K562 (cell line): ENCODE measurements at regions of chr1 and their contacts with region 1.

Region 1: GRCh38 chr1:209692745-209693504 is 11.7 kb upstream of the HSD11B1 start:
- DNase-seq: peak; percentile 72 to 85 (median 76)
- ATAC-seq: peak; percentile 79
- H3K4me3 ChIP-seq: no peak overlapping the region
- H3K27ac ChIP-seq: no peak overlapping the region
- H3K4me1 ChIP-seq: no peaks in the 10 kb centered on the region; a peak in 2 of 5 replicates
- H3K27me3 ChIP-seq: peaks cover 0 to 3% of the 10 kb centered on the region in 2 experiments; a peak in 1 of 5 replicates
- CTCF ChIP-seq: peak; percentile 86 to 99 (median 90)
- EP300 ChIP-seq: peak; percentile 34; the same call in 1 of the 2 replicates
- POLR2A ChIP-seq: no peak
- RAD21 ChIP-seq: peak; percentile 99 to 100

Region 2: DNA sequence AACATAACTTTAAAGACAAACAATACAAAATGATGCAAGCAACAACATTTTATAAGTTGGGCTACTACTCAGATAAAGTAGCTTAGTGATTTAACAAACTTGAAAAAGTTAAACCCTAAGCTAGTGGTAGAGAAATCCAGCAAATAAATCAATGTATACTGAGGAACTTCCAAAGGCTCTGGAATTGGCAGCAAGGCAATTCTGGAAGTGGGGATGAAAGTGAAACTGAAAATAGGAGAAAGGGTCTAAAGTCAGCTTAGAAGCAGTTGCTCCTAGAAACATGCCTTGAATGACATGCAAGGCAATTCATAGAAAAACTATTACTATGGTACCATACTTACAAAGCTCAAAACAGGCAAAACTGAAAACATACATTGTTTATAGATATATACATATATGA is 199.4 kb before region 1 on chr1:
- CTCF ChIA-PET with region 1: no interaction called
- POLR2A ChIA-PET with region 1: no interaction called
- in situ Hi-C with region 1: no loop called
- intact Hi-C with region 1: no loop called
- DNase-seq: no peak
- ATAC-seq: no peak
- H3K4me3 ChIP-seq: no peak overlapping the region
- H3K27ac ChIP-seq: no peak overlapping the region
- H3K4me1 ChIP-seq: no peaks in the 10 kb centered on the region
- H3K27me3 ChIP-seq: no peaks in the 10 kb centered on the region
- CTCF ChIP-seq: no peak
- EP300 ChIP-seq: no peak
- POLR2A ChIP-seq: no peak
- RAD21 ChIP-seq: no peak

Region 3: DNA sequence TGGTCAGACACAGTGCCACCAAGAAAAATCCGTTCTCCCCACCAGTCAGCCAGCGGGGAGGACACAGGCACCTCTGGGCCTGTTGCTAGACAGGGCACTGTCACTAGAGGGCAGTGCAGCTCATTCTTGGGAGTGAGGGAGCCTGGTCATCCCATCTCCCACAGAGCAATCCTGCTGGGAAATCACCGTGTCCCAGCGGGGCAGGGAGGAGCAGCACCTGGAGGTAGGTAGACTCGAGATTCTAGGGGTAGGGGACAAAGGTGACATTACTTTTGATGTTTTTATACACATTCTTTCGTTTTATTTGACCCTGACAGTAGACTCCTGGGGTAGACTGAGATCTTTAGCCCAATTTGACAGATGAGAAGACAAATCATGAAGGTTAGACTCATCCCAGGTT is 116.1 kb before region 1 on chr1:
- CTCF ChIA-PET with region 1: interaction called, 64 read pairs
- POLR2A ChIA-PET with region 1: interaction called, 3 read pairs
- in situ Hi-C with region 1: loop called (anchors 5 kb)
- intact Hi-C with region 1: loop called (anchors 1 kb)
- DNase-seq: peak; percentile 76 to 83 (median 82)
- ATAC-seq: peak; percentile 99
- H3K4me3 ChIP-seq: no peak overlapping the region
- H3K27ac ChIP-seq: no peak overlapping the region
- H3K4me1 ChIP-seq: no peaks in the 10 kb centered on the region
- H3K27me3 ChIP-seq: peaks cover 3% of the 10 kb centered on the region in 2 experiments; a peak in 2 of 5 replicates
- CTCF ChIP-seq: peak; percentile 85 to 96 (median 94)
- EP300 ChIP-seq: no peak
- POLR2A ChIP-seq: no peak
- RAD21 ChIP-seq: peak; percentile 88 to 94

Region 4: DNA sequence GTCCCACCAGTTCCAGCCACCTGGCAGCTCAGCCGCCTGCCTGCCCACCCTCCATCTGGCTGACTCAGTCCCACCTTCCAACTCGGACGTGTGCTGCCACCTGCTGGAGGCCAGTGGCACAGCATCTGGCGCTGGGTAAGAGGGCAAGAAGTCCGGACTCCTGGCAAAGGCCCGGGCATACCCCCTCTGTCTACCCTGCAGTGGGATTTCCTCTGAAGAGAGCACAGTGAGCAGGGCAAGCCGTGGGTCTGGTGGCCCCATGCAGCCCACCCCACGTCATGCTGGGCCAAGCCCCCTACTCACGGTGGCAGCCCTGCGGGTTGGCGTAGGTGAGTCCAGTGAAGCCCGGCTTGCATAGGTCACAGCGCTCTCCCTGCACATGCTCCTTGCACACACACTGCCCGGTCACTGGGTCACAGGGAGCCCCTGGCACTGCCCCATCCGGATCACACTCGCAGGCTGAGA is 65.2 kb before region 1 on chr1:
- CTCF ChIA-PET with region 1: interaction called, 5 read pairs
- POLR2A ChIA-PET with region 1: interaction called, 3 read pairs
- in situ Hi-C with region 1: no loop called
- intact Hi-C with region 1: loop called (anchors 1 kb)
- DNase-seq: peak; percentile 75 to 86 (median 78)
- ATAC-seq: peak; percentile 91
- H3K4me3 ChIP-seq: no peak overlapping the region
- H3K27ac ChIP-seq: no peak overlapping the region
- H3K4me1 ChIP-seq: peaks cover 0 to 22% of the 10 kb centered on the region in 2 experiments; a peak in 2 of 5 replicates
- H3K27me3 ChIP-seq: peaks cover 20 to 78% of the 10 kb centered on the region in 2 experiments; a peak in 4 of 5 replicates
- CTCF ChIP-seq: peak; percentile 89 to 97 (median 90)
- EP300 ChIP-seq: no peak
- POLR2A ChIP-seq: no peak
- RAD21 ChIP-seq: peak; percentile 71 to 82

Region 5: DNA sequence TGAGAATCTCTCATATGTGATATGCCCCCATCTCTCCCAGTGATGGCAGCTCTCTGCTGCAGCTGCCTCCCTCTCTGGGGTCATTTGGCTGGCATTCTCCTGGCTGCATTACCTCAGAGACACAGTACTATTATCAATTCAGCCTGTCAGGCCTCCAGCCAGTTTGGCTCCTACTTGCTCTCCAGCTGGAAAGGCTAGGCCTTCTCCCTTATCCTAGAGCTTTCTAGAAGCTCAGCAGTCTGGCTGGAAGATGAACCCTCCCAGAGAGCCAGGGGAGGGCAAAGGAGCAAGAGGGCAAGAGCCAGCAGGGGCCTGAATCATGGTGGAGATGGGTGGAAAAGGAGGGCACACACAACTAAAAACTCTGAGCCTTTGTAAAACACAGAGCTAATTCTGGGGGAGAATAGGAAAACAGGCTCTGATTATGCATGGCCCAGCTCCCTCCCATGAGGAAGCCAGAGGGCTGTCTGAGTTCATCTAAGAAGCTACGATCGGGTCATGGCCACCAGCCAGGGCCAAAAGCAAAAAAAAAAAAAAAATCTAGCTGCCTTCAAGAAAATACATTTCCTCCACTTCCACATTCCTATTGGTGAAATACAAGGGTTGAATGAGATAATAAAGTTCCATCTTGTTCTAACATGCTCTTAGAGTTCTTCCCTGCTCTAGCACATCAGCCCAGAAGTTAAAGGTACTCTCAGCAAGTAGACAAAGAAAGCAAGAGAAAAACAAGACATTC is 49.5 kb before region 1 on chr1:
- CTCF ChIA-PET with region 1: interaction called, 29 read pairs
- POLR2A ChIA-PET with region 1: interaction called, 3 read pairs
- in situ Hi-C with region 1: loop called (anchors 5 kb)
- intact Hi-C with region 1: loop called (anchors 1 kb)
- DNase-seq: no peak
- ATAC-seq: no peak
- H3K4me3 ChIP-seq: no peak overlapping the region
- H3K27ac ChIP-seq: no peak overlapping the region
- H3K4me1 ChIP-seq: peaks cover 37 to 66% of the 10 kb centered on the region in 2 experiments
- H3K27me3 ChIP-seq: no peaks in the 10 kb centered on the region
- CTCF ChIP-seq: peak in 1 of 3 experiments; percentile 43; a peak in 2 of 6 replicates
- EP300 ChIP-seq: no peak
- POLR2A ChIP-seq: no peak
- RAD21 ChIP-seq: peak; percentile 16 to 42; a peak in 3 of 4 replicates

Region 6: DNA sequence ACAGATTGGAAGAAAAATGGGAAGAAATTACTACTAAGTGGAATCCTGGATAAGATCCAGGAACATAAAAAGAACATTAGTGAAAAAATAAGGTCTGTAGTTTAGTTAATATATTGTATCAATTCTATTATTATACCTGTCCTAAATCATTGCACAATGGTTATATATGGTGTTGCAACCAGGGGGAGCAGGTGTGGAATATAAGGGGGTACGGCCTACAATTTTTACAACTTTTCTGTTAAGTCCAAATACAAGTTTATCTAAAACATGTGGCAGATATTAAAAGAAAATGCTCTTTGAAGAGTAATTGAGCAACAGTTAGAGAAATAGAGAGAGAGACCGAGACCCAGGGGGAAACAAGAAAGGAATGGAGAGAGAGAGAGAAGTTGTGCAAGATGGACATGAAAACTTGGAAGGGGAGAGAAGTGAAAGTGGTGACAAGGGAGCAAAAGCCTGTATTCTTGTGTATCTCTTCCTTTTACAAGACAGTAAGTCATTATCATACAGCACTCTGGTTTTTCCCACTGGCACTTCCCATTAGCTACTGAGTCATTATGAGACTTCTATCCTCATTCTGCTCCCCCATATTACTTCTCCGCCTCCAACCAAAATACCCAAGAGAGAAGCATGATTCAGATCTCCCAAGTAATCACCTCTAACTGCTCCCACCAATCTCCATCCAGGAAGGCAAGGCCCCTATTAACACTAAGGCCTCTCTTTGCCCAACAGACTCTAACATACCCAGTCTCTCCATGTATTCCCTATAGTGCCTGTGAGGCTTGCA is 40.7 kb after region 1 on chr1:
- CTCF ChIA-PET with region 1: no interaction called
- POLR2A ChIA-PET with region 1: no interaction called
- in situ Hi-C with region 1: no loop called
- intact Hi-C with region 1: no loop called
- DNase-seq: no peak
- ATAC-seq: no peak
- H3K4me3 ChIP-seq: no peak overlapping the region
- H3K27ac ChIP-seq: no peak overlapping the region
- H3K4me1 ChIP-seq: no peaks in the 10 kb centered on the region
- H3K27me3 ChIP-seq: no peaks in the 10 kb centered on the region; a peak in 1 of 5 replicates
- CTCF ChIP-seq: no peak
- EP300 ChIP-seq: no peak
- POLR2A ChIP-seq: no peak
- RAD21 ChIP-seq: no peak

Region 7: DNA sequence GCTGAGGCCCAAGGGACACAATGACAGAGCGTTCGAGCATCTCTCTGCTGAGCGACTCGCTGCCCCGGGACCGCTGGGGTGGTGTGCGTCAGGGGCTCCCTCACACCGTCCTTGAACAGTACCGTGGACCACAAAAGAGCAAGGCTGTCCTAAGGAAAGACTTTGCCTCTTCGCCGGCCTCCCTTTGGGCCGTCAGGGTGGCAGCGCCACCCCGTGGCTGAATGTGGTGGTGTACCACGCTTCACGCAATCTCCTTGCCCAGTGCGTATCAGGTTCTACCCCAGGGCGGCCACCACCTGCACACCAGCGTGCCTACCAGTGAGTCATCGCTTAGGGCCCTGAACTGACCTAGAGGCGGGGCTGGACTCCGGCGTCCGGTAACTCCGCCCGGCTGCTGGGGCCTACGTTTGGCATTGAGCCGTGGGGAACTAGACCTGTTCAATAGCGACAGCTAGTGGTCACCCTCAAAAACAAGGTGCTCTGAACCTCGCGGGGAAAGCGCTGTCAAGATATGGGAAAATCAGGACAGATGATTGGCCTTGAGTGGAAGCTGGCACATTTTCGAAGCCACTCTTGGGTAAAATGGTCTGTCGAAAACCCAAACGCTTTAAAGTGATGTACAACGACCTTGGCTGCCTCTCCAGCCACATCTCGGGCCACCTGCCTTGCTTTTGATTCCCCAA is 54.8 kb after region 1 on chr1:
- CTCF ChIA-PET with region 1: interaction called, 5 read pairs
- POLR2A ChIA-PET with region 1: no interaction called
- in situ Hi-C with region 1: no loop called
- intact Hi-C with region 1: loop called (anchors 1 kb)
- DNase-seq: peak; percentile 93 to 96 (median 95)
- ATAC-seq: peak; percentile 99
- H3K4me3 ChIP-seq: peak overlapping the region; percentile 28
- H3K27ac ChIP-seq: no peak overlapping the region; the same call in 2 of the 3 replicates
- H3K4me1 ChIP-seq: peaks cover 5 to 7% of the 10 kb centered on the region in 2 experiments; a peak in 4 of 5 replicates
- H3K27me3 ChIP-seq: peaks cover 13 to 19% of the 10 kb centered on the region in 2 experiments
- CTCF ChIP-seq: peak; percentile 80 to 100 (median 86)
- EP300 ChIP-seq: peak; percentile 36; the same call in 1 of the 2 replicates
- POLR2A ChIP-seq: no peak
- RAD21 ChIP-seq: peak; percentile 94 to 97